ENCODE measurements at regions of chr10 and their contacts with region 1.

Region 1: DNA sequence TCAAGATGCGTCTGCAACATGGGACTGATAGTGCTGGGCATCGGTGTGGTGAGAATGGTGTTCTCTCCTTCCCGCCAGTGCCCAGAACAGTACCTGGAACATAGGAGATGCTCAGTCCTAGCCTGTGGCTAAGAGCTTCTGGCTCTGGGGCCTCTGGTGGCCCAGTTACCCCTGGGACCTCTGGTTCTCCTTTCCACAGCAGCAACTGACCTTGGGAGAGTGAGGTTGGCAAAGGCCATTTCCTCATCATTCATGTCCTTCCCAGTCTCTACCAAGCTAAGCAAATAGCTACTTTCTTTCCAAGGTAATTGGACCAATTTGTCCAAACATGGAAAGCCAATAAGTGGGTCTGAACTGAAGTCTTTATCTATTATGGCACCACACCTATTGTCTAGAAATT is 11.6 kb upstream of the GOLGA7B start:
- DNase-seq: no peak
- ATAC-seq: no peak
- H3K4me3 ChIP-seq: no peak overlapping the region
- H3K27ac ChIP-seq: peak overlapping the region; percentile 82
- H3K4me1 ChIP-seq: peaks cover 16% of the 10 kb centered on the region
- H3K27me3 ChIP-seq: no peaks in the 10 kb centered on the region
- CTCF ChIP-seq: no peak

Region 2: DNA sequence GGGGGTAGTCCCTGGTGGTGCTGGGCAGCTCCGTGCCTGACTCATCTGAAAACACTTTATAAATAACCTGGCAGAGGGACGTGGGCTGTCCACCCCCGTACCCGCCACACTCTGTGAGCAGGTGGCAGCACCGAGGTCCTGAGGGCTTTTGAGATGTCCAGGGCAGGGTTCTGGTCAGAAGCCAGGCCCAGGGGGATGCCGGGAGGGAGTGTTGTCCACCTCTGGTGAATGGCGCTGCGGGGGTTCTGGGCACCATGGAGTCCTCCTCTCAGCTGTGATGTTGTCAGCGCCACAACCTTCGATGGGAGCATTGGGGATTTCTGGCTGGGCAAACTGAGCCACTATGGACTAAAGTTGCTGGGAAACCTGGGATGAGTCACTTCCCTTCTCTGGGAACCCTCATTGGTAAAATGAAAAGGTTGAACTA is 15.8 kb before region 1 on chr10:
- intact Hi-C with region 1: loop called in 1 of 2 experiments (anchors 2 kb)
- DNase-seq: peak; percentile 61 to 86
- ATAC-seq: peak; percentile 82 to 88 (median 84)
- H3K4me3 ChIP-seq: peak overlapping the region; percentile 56
- H3K27ac ChIP-seq: peak overlapping the region; percentile 95
- H3K4me1 ChIP-seq: peaks cover 44% of the 10 kb centered on the region
- H3K27me3 ChIP-seq: no peaks in the 10 kb centered on the region
- CTCF ChIP-seq: peak; percentile 5